Colonic mucosa (tissue), 4 donors: ENCODE measurements at regions of chr17 and their contacts with region 1.

Region 1: GRCh38 chr17:78497115-78497540 is 80.1 kb downstream of the DNAH17 start:
- DNase-seq: peak; percentile 64
- H3K4me3 ChIP-seq: no peak overlapping the region
- H3K27ac ChIP-seq: no peak overlapping the region
- H3K4me1 ChIP-seq: no peaks in the 10 kb centered on the region
- H3K27me3 ChIP-seq: no peaks in the 10 kb centered on the region
- CTCF ChIP-seq: peak; percentile 38

Region 2: GRCh38 chr17:78421484-78422266 is 75.5 kb before region 1 on chr17:
- intact Hi-C with region 1: no loop called
- DNase-seq: peak; percentile 85
- H3K4me3 ChIP-seq: no peak overlapping the region
- H3K27ac ChIP-seq: no peak overlapping the region
- H3K4me1 ChIP-seq: peaks cover 5% of the 10 kb centered on the region
- H3K27me3 ChIP-seq: no peaks in the 10 kb centered on the region
- CTCF ChIP-seq: peak; percentile 99

Region 3: DNA sequence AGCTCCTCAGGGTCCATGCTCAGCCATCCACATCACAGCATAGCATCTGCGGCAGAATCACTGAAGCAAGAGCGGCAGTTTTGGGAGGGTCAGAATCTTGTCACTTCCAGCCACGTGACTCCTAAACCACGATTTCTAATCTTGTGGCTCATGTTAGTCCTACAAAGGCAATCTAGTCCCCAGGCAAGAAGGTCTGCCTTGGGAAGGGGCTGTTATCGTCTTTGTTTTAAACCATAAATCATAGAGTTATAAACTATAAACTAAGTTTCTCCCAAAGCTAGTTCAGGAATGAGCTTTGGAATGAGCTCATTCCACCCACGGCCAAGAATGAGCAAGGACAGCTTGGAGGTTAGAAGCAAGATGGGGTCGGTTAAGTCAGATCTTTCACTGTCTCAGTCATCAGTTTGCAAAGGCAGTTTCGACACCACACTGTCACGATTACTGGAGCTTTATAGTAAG is 100.9 kb after region 1 on chr17:
- intact Hi-C with region 1: no loop called
- DNase-seq: no peak
- H3K4me3 ChIP-seq: no peak overlapping the region
- H3K27ac ChIP-seq: no peak overlapping the region
- H3K4me1 ChIP-seq: no peaks in the 10 kb centered on the region
- H3K27me3 ChIP-seq: no peaks in the 10 kb centered on the region
- CTCF ChIP-seq: no peak

Region 4: GRCh38 chr17:78708510-78708973 is 211.4 kb after region 1 on chr17:
- intact Hi-C with region 1: loop called (anchors 2 kb)
- DNase-seq: peak; percentile 63
- H3K4me3 ChIP-seq: no peak overlapping the region
- H3K27ac ChIP-seq: no peak overlapping the region
- H3K4me1 ChIP-seq: peaks cover 3% of the 10 kb centered on the region
- H3K27me3 ChIP-seq: no peaks in the 10 kb centered on the region
- CTCF ChIP-seq: peak; percentile 77

Region 5: GRCh38 chr17:78798695-78799559 is 301.8 kb after region 1 on chr17:
- intact Hi-C with region 1: loop called (anchors 5 kb)
- DNase-seq: no peak
- H3K4me3 ChIP-seq: no peak overlapping the region
- H3K27ac ChIP-seq: no peak overlapping the region
- H3K4me1 ChIP-seq: no peaks in the 10 kb centered on the region
- H3K27me3 ChIP-seq: no peaks in the 10 kb centered on the region
- CTCF ChIP-seq: no peak

Region 6: DNA sequence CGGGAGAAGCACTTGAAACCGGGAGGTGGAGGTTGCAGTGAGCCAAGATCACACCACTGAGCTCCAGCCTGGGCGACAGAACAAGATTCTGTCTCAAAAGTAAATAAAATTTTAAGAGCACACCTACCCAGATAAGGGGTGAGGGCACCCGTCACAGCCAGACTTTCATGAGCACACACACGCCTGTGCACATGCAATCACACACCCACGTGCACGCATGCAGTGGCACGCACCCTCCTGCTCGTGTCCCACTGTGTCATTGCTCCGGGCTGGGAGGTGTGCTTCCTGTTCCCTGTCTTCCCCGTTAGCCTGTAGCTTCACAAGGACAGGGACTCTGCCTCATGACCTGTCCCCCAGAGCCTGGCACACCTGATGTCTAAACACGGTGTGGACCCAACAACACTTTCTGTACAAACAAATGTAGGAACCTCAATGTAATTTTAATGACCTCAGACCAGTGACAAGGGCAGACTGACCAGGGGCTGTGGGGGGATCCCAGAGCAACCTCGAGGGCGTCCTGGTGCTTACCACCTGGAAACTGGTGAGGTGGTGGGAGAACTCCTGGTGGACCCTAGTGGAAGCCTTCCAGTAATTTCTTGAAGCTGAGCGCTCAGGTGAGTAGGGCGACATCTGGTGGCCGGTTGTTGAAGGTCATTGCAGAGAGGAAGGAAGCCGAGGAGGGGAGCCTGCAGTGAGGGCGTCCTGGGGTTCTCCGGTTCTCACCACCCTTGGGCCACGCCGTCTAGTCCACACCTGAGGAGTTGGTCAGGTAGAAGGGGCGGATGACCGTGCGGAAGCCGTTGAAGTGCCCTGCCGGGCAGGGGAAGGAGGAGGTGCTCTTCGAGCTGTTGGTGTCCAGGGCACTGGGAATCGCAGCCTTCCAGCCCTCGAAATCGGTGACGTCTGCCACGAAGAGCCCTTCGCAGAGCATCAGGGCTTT is 474.0 kb after region 1 on chr17:
- intact Hi-C with region 1: loop called (anchors 5 kb)
- DNase-seq: peak; percentile 87
- H3K4me3 ChIP-seq: no peak overlapping the region
- H3K27ac ChIP-seq: no peak overlapping the region
- H3K4me1 ChIP-seq: peaks cover 9% of the 10 kb centered on the region
- H3K27me3 ChIP-seq: no peaks in the 10 kb centered on the region
- CTCF ChIP-seq: peak; percentile 84

Region 7: GRCh38 chr17:78986048-78986648 is 489.0 kb after region 1 on chr17:
- intact Hi-C with region 1: no loop called
- DNase-seq: peak; percentile 53
- H3K4me3 ChIP-seq: no peak overlapping the region
- H3K27ac ChIP-seq: peak overlapping the region; percentile 59
- H3K4me1 ChIP-seq: no peaks in the 10 kb centered on the region
- H3K27me3 ChIP-seq: no peaks in the 10 kb centered on the region
- CTCF ChIP-seq: no peak